ENCODE measurements at regions of chr3 and their contacts with region 1.

Region 1: GRCh38 chr3:71064288-71064955 is 519.1 kb downstream of the FOXP1 start:
- DNase-seq: peak; percentile 79 to 86 (median 83)
- H3K4me3 ChIP-seq: peak overlapping the region; percentile 73 to 90
- H3K4me3 Mint-ChIP-seq: no peak overlapping the region
- H3K27ac ChIP-seq: peak overlapping the region; percentile 90
- H3K27ac Mint-ChIP-seq: no peak overlapping the region
- H3K4me1 ChIP-seq: peaks cover 73% of the 10 kb centered on the region
- H3K4me1 Mint-ChIP-seq: peaks cover 37 to 67% (median 56%) of the 10 kb centered on the region in 4 donors
- H3K27me3 ChIP-seq: no peaks in the 10 kb centered on the region
- H3K27me3 Mint-ChIP-seq: no peaks in the 10 kb centered on the region

Region 2: GRCh38 chr3:71006810-71007785 is 57.3 kb before region 1 on chr3:
- CTCF ChIA-PET with region 1: interaction called, 21 read pairs
- POLR2A ChIA-PET with region 1: interaction called, 28 read pairs
- intact Hi-C with region 1: loop called (anchors 1 kb)
- DNase-seq: peak in 4 of 5 donors; percentile 40 to 45 (median 42)
- H3K4me3 ChIP-seq: no peak overlapping the region
- H3K4me3 Mint-ChIP-seq: peak overlapping the region in 2 of 8 donors; percentile 47 to 66
- H3K27ac ChIP-seq: peak overlapping the region; percentile 68
- H3K27ac Mint-ChIP-seq: peak overlapping the region; percentile 64 to 98 (median 88)
- H3K4me1 ChIP-seq: peaks cover 70% of the 10 kb centered on the region
- H3K4me1 Mint-ChIP-seq: peaks cover 50 to 81% (median 68%) of the 10 kb centered on the region in 4 donors
- H3K27me3 ChIP-seq: no peaks in the 10 kb centered on the region
- H3K27me3 Mint-ChIP-seq: no peaks in the 10 kb centered on the region

Region 3: GRCh38 chr3:71050538-71051258 is 13.7 kb before region 1 on chr3:
- CTCF ChIA-PET with region 1: interaction called, 14 read pairs
- POLR2A ChIA-PET with region 1: interaction called, 97 read pairs
- intact Hi-C with region 1: loop called (anchors 1 kb)
- DNase-seq: peak; percentile 64 to 83 (median 74)
- H3K4me3 ChIP-seq: no peak overlapping the region
- H3K4me3 Mint-ChIP-seq: peak overlapping the region in 7 of 8 donors; percentile 26 to 83 (median 66)
- H3K27ac ChIP-seq: peak overlapping the region; percentile 33
- H3K27ac Mint-ChIP-seq: peak overlapping the region; percentile 85 to 97 (median 94)
- H3K4me1 ChIP-seq: peaks cover 100% of the 10 kb centered on the region
- H3K4me1 Mint-ChIP-seq: peaks cover 0 to 99% (median 87%) of the 10 kb centered on the region in 4 donors
- H3K27me3 ChIP-seq: no peaks in the 10 kb centered on the region
- H3K27me3 Mint-ChIP-seq: no peaks in the 10 kb centered on the region

Region 4: GRCh38 chr3:71130471-71131374 is 66.3 kb after region 1 on chr3:
- CTCF ChIA-PET with region 1: interaction called, 3 read pairs
- POLR2A ChIA-PET with region 1: interaction called, 75 read pairs
- intact Hi-C with region 1: loop called (anchors 1 kb)
- DNase-seq: peak; percentile 79 to 90 (median 85)
- H3K4me3 ChIP-seq: peak overlapping the region; percentile 59 to 90
- H3K4me3 Mint-ChIP-seq: peak overlapping the region; percentile 90 to 99 (median 94)
- H3K27ac ChIP-seq: peak overlapping the region; percentile 87
- H3K27ac Mint-ChIP-seq: peak overlapping the region; percentile 93 to 98 (median 97)
- H3K4me1 ChIP-seq: peaks cover 80% of the 10 kb centered on the region
- H3K4me1 Mint-ChIP-seq: peaks cover 39 to 90% (median 61%) of the 10 kb centered on the region in 4 donors
- H3K27me3 ChIP-seq: no peaks in the 10 kb centered on the region
- H3K27me3 Mint-ChIP-seq: no peaks in the 10 kb centered on the region

Region 5: DNA sequence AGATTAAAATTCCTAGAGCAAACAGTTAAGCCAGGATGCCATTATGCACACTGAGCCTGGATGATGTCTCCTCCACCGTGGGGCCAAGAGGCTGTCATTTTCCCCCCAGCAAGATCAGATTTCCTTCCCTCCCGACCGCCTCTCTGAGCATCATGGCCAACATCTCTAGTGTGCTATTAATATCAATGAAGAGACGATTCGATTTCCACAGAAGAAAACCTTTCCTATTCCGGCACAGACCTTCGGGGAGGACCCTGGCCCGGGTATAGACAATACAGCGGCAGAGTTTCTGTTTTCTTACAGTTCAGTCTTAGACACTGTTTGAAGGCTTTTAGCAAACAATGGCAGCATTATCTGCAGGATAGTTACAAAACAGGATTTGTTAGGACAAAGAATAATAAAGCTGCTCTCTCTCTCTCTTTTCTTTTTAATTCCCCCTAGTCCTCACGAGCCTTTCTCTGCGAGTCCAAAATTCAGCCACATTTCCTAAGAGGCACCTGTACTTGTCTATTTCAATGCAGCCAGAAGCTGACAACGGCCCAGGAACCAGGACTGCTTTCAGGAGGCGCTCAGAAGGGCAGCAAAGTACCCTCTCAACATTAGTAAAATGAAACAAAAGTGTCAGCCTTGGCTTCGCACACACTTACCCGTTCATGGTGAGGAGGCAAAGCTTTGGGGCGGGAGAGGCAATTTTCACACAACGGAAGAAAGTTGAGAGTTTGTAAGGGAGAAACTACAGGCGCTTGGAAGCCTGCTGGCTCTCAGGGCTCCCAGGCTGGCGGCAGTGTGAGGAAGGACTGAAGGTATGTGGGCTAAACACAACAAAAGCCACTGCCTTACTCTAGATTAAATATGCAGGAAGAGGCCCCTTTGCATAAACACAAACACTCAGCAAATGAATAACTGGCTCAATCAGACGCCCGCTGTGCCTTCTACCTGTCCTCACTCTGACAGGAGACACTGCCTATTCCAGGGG is 241.1 kb after region 1 on chr3:
- CTCF ChIA-PET with region 1: no interaction called
- POLR2A ChIA-PET with region 1: interaction called, 3 read pairs
- intact Hi-C with region 1: loop called (anchors 5 kb)
- DNase-seq: peak in 2 of 5 donors; percentile 14 to 15
- H3K4me3 ChIP-seq: peak overlapping the region; percentile 21 to 30
- H3K4me3 Mint-ChIP-seq: peak overlapping the region; percentile 82 to 96 (median 88)
- H3K27ac ChIP-seq: peak overlapping the region; percentile 11
- H3K27ac Mint-ChIP-seq: peak overlapping the region; percentile 81 to 96 (median 88)
- H3K4me1 ChIP-seq: peaks cover 80% of the 10 kb centered on the region
- H3K4me1 Mint-ChIP-seq: peaks cover 62 to 92% (median 76%) of the 10 kb centered on the region in 4 donors
- H3K27me3 ChIP-seq: no peaks in the 10 kb centered on the region
- H3K27me3 Mint-ChIP-seq: no peaks in the 10 kb centered on the region

Region 6: GRCh38 chr3:71495708-71496472 is 431.5 kb after region 1 on chr3:
- CTCF ChIA-PET with region 1: interaction called, 5 read pairs
- POLR2A ChIA-PET with region 1: interaction called, 22 read pairs
- intact Hi-C with region 1: loop called (anchors 10 kb)
- DNase-seq: peak in 3 of 5 donors; percentile 27 to 64 (median 39)
- H3K4me3 ChIP-seq: peak overlapping the region; percentile 1 to 26
- H3K4me3 Mint-ChIP-seq: peak overlapping the region; percentile 72 to 89 (median 85)
- H3K27ac ChIP-seq: peak overlapping the region; percentile 50
- H3K27ac Mint-ChIP-seq: peak overlapping the region; percentile 88 to 98 (median 94)
- H3K4me1 ChIP-seq: peaks cover 82% of the 10 kb centered on the region
- H3K4me1 Mint-ChIP-seq: peaks cover 61 to 90% (median 72%) of the 10 kb centered on the region in 4 donors
- H3K27me3 ChIP-seq: no peaks in the 10 kb centered on the region
- H3K27me3 Mint-ChIP-seq: no peaks in the 10 kb centered on the region